Mammary epithelial cell (primary cell): ENCODE measurements at regions of chr7 and their contacts with region 1.

Region 1: GRCh38 chr7:101743241-101743994 is 74.0 kb upstream of the CUX1 start:
- DNase-seq: peak; percentile 66
- H3K4me3 ChIP-seq: peak overlapping the region; percentile 55 to 57 (median 55)
- H3K27ac ChIP-seq: no peak overlapping the region
- H3K4me1 ChIP-seq: peaks cover 5% of the 10 kb centered on the region
- H3K27me3 ChIP-seq: no peaks in the 10 kb centered on the region
- CTCF ChIP-seq: peak in 1 of 2 donors; percentile 65

Region 2: GRCh38 chr7:101333912-101334311 is 409.5 kb before region 1 on chr7:
- CTCF ChIA-PET with region 1: no interaction called
- dilution Hi-C with region 1: no loop called
- in situ Hi-C with region 1: no loop called
- intact Hi-C with region 1: no loop called
- DNase-seq: no peak
- H3K4me3 ChIP-seq: no peak overlapping the region
- H3K27ac ChIP-seq: no peak overlapping the region
- H3K4me1 ChIP-seq: no peaks in the 10 kb centered on the region
- H3K27me3 ChIP-seq: no peaks in the 10 kb centered on the region
- CTCF ChIP-seq: no peak

Region 3: DNA sequence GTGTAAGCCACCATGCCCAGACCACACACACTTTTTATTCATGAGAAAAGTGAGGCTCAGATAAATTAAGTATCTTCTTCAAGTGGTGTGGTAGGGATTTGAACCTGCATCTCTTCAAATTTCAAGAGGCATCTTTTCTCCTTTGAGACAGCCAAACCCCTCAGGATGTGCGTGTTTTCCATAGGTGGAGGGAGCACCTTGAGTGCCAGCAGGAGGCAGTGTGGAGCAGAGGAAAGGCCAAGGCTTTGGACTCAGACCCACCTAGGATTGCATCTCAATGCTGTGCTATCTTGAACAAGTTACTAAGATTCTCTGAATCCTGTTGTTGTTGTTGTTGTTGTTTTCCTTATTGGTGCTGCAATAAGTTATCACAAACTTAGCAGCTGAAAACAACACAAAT is 74.1 kb before region 1 on chr7:
- CTCF ChIA-PET with region 1: no interaction called
- dilution Hi-C with region 1: loop called (anchors 5 kb)
- in situ Hi-C with region 1: no loop called
- intact Hi-C with region 1: no loop called
- DNase-seq: no peak
- H3K4me3 ChIP-seq: no peak overlapping the region
- H3K27ac ChIP-seq: no peak overlapping the region
- H3K4me1 ChIP-seq: no peaks in the 10 kb centered on the region
- H3K27me3 ChIP-seq: peaks cover 2% of the 10 kb centered on the region
- CTCF ChIP-seq: peak in 1 of 2 donors; percentile 12

Region 4: GRCh38 chr7:101688183-101688831 is 55.1 kb before region 1 on chr7:
- CTCF ChIA-PET with region 1: no interaction called
- dilution Hi-C with region 1: loop called (anchors 5 kb)
- in situ Hi-C with region 1: no loop called
- intact Hi-C with region 1: loop called (anchors 2 kb)
- DNase-seq: peak; percentile 34
- H3K4me3 ChIP-seq: peak overlapping the region in 2 of 3 experiments; percentile 34 to 35
- H3K27ac ChIP-seq: no peak overlapping the region
- H3K4me1 ChIP-seq: peaks cover 6% of the 10 kb centered on the region
- H3K27me3 ChIP-seq: no peaks in the 10 kb centered on the region
- CTCF ChIP-seq: peak; percentile 53 to 92

Region 5: DNA sequence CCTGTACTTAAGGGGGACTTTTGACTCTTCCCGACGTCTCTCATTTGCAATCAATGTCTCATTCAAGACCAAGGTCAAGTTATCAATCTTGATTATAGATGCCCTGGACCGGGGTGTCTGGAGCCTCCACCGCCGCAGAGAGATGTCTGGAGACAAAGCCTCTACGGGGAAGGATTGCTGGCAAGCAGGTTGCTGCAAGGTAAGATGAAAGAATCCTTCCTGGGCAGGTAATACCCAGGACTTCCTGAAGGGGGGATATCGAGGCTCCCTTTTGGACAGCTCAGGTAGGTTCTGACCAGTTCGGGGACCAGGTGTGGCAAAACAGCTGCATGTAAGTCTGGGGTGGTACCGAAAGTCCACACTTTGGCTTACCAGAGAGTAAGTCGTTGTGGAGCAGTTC is 61.5 kb after region 1 on chr7:
- CTCF ChIA-PET with region 1: interaction called, 4 read pairs
- dilution Hi-C with region 1: loop called (anchors 5 kb)
- in situ Hi-C with region 1: loop called in 1 of 2 experiments (anchors 10 kb)
- intact Hi-C with region 1: no loop called
- DNase-seq: peak; percentile 32
- H3K4me3 ChIP-seq: no peak overlapping the region
- H3K27ac ChIP-seq: no peak overlapping the region
- H3K4me1 ChIP-seq: peaks cover 12% of the 10 kb centered on the region
- H3K27me3 ChIP-seq: no peaks in the 10 kb centered on the region
- CTCF ChIP-seq: peak; percentile 66

Region 6: GRCh38 chr7:101882595-101883564 is 139.5 kb after region 1 on chr7:
- CTCF ChIA-PET with region 1: no interaction called
- dilution Hi-C with region 1: no loop called
- in situ Hi-C with region 1: no loop called
- intact Hi-C with region 1: loop called (anchors 5 kb)
- DNase-seq: peak; percentile 99
- H3K4me3 ChIP-seq: peak overlapping the region in 1 of 3 experiments; percentile 28
- H3K27ac ChIP-seq: peak overlapping the region; percentile 88
- H3K4me1 ChIP-seq: peaks cover 26% of the 10 kb centered on the region
- H3K27me3 ChIP-seq: no peaks in the 10 kb centered on the region
- CTCF ChIP-seq: no peak